CD8-positive, alpha-beta memory T cell (primary cell): ENCODE measurements at regions of chr16 and their contacts with region 1.

Region 1: DNA sequence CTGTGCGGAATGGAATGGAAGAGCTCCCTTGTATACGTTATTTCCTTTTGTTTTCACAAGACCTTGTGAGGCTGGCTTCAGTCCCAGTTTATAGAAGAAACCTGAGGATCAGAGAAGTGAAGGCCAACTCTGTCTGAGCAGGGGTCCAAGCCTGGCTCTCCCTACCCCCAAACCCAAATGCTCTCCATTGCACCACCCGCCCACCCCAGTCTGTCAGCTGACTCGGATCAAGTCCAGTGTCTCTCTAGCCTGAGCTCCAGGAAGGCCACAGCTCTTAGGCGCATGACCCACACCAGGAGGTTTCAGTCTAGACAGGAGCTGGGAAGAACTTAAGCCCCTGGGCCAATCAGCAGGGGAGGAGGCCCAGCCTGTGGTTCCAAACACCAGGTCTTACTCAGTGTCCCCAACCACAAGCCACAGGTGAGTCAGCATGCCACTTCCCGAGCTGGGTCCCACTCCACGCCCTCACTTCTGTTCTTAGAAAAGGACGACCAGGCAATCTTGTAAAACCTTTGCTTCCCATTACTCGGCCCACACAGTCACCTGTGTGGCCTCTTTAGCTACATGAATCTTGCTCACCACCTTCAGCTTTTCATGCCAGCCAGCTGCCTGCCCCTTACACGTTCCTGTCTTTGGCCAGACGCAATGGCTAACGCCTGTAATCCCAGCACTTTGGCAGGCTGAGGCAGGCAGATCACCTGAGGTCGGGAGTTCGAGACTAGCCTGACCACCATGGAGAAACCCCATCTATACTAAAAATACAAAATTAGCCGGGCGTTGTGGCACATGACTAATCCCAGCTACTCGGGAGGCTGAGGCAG is 27.8 kb downstream of the TK2 start:
- DNase-seq: peak; percentile 43 to 94 (median 69)
- H3K4me3 ChIP-seq: peak overlapping the region; percentile 41
- H3K4me3 Mint-ChIP-seq: peak overlapping the region; percentile 73 to 89 (median 82)
- H3K27ac ChIP-seq: peak overlapping the region; percentile 59
- H3K27ac Mint-ChIP-seq: peak overlapping the region; percentile 95 to 100 (median 96)
- H3K4me1 ChIP-seq: peaks cover 78% of the 10 kb centered on the region
- H3K4me1 Mint-ChIP-seq: peaks cover 84 to 93% (median 86%) of the 10 kb centered on the region in 3 donors
- H3K27me3 ChIP-seq: no peaks in the 10 kb centered on the region
- H3K27me3 Mint-ChIP-seq: no peaks in the 10 kb centered on the region

Region 2: GRCh38 chr16:66406534-66407221 is 115.5 kb before region 1 on chr16:
- CTCF ChIA-PET with region 1: interaction called, 10 read pairs
- POLR2A ChIA-PET with region 1: no interaction called
- DNase-seq: peak; percentile 74 to 89 (median 82)
- H3K4me3 ChIP-seq: peak overlapping the region; percentile 75
- H3K4me3 Mint-ChIP-seq: peak overlapping the region; percentile 81 to 93 (median 85)
- H3K27ac ChIP-seq: no peak overlapping the region
- H3K27ac Mint-ChIP-seq: peak overlapping the region in 4 of 8 donors; percentile 29 to 76 (median 64)
- H3K4me1 ChIP-seq: peaks cover 21% of the 10 kb centered on the region
- H3K4me1 Mint-ChIP-seq: peaks cover 25 to 29% (median 28%) of the 10 kb centered on the region in 3 donors
- H3K27me3 ChIP-seq: no peaks in the 10 kb centered on the region
- H3K27me3 Mint-ChIP-seq: peaks cover 0 to 12% of the 10 kb centered on the region in 2 donors

Region 3: GRCh38 chr16:66444049-66444481 is 78.1 kb before region 1 on chr16:
- CTCF ChIA-PET with region 1: no interaction called
- POLR2A ChIA-PET with region 1: no interaction called
- DNase-seq: no peak
- H3K4me3 ChIP-seq: no peak overlapping the region
- H3K4me3 Mint-ChIP-seq: no peak overlapping the region
- H3K27ac ChIP-seq: no peak overlapping the region
- H3K27ac Mint-ChIP-seq: peak overlapping the region in 1 of 8 donors; percentile 11
- H3K4me1 ChIP-seq: no peaks in the 10 kb centered on the region
- H3K4me1 Mint-ChIP-seq: no peaks in the 10 kb centered on the region
- H3K27me3 ChIP-seq: peaks cover 10% of the 10 kb centered on the region
- H3K27me3 Mint-ChIP-seq: peaks cover 9 to 50% of the 10 kb centered on the region in 2 donors

Region 4: DNA sequence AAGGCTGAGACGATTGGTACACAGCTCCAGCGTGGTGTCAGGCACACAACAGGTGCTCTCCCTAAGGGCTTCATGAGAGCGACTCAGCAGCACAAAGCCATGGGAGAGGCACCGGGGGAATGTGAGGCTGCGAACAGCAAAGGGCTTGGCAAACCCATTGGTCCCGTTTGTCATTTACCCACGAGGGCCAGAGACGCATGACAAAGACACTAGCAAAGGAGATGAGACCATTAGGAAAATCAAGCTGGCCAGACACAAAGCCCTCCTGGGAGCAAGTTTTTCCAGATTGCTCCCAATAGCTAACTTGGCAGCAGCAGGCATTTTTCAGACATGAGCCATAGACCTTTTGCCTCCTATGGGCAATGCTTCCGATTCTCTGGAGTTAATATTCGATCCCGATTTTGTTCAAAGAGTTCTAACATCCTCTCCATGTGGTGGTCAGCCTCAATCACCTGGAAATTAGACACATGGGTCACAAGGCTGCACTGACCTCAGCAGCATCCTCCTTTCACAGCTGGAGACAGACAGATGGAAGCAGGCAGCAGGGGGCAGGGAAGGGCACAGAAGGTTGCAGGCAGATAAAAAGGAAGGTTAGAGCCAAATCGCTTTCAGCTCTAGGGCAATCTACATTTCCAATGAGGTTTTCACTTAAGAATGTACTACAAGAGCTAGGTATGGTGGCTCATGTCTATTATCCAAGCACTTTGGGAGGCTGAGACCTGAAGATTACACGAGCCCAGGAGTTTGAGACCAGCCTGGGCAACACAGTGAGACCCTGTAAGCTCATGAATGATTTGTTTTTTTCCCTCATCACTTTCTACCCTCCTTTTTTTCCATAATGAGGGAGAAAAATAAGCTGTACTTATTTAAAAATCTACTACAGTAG is 10.3 kb before region 1 on chr16:
- CTCF ChIA-PET with region 1: interaction called, 39 read pairs
- POLR2A ChIA-PET with region 1: interaction called, 7 read pairs
- DNase-seq: no peak
- H3K4me3 ChIP-seq: no peak overlapping the region
- H3K4me3 Mint-ChIP-seq: peak overlapping the region in 1 of 7 donors; percentile 8
- H3K27ac ChIP-seq: no peak overlapping the region
- H3K27ac Mint-ChIP-seq: peak overlapping the region in 7 of 8 donors; percentile 16 to 86 (median 66)
- H3K4me1 ChIP-seq: peaks cover 25% of the 10 kb centered on the region
- H3K4me1 Mint-ChIP-seq: peaks cover 33 to 44% (median 35%) of the 10 kb centered on the region in 3 donors
- H3K27me3 ChIP-seq: no peaks in the 10 kb centered on the region
- H3K27me3 Mint-ChIP-seq: no peaks in the 10 kb centered on the region

Region 5: DNA sequence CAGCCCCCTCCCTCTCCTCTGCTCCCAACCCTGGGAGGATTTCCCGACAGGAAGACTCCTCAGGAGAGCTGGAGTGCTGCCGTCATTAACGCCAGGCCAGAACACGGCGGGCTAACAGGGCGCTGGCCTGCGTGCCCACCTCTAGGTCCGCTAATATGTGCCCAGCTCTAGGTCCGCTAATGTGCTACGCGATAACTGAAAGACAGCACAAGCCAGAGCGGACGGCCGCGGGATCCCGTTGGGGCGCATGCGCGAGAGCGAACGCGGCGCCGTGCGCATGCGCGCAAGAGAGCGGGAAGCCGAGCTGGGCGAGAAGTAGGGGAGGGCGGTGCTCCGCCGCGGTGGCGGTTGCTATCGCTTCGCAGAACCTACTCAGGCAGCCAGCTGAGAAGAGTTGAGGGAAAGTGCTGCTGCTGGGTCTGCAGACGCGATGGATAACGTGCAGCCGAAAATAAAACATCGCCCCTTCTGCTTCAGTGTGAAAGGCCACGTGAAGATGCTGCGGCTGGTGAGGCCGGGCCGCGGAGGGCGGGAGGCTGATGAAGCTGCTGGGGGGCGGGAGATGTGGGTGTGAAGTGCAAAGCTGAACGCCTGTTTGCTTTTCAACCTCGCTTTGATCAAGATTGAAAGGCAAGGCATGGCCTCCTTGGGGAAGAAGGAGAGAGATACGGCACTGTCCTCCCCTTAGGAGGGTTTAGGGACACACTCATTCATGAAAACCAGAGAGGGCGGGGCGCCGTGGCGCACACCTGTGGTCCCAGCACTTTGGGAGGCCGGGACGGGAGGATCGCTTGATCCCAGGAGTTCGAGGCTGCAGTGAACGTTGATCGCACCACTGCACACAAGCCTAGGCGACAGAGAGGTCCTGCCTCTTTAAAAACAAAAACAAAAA is 30.4 kb after region 1 on chr16 and contains the start of gene CKLF:
- CTCF ChIA-PET with region 1: interaction called, 32 read pairs
- POLR2A ChIA-PET with region 1: interaction called, 26 read pairs
- DNase-seq: peak; percentile 85 to 94 (median 92)
- H3K4me3 ChIP-seq: peak within 1 kb of the TSS; percentile 87
- H3K4me3 Mint-ChIP-seq: peak within 1 kb of the TSS; percentile 90 to 98 (median 97)
- H3K27ac ChIP-seq: peak within 1 kb of the TSS; percentile 85
- H3K27ac Mint-ChIP-seq: peak within 1 kb of the TSS; percentile 92 to 98 (median 96)
- H3K4me1 ChIP-seq: peaks cover 72% of the 10 kb centered on the region
- H3K4me1 Mint-ChIP-seq: peaks cover 76 to 88% (median 86%) of the 10 kb centered on the region in 3 donors
- H3K27me3 ChIP-seq: no peaks in the 10 kb centered on the region
- H3K27me3 Mint-ChIP-seq: peaks cover 0 to 5% of the 10 kb centered on the region in 2 donors
- total RNA-seq, gene CKLF: 118 to 121 TPM

Region 6: DNA sequence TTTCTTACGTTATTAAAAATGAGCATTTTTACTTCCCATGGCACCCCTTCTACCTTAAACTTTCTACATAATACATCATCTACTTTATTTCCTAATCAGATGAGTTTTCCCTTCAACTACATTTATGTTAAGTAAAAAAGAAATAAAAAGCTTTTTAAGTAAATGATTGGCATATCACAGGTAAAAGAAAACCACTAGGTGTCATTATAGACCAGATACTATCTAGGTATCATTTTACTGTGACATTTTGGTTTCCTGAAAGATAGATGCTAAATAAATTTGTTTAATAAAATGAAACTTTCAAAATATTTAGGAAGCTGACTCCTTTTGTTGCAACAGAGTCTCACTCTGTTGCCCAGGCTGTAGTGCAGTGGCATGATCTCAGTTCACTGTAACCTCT is 40.2 kb after region 1 on chr16:
- CTCF ChIA-PET with region 1: interaction called, 3 read pairs
- POLR2A ChIA-PET with region 1: interaction called, 11 read pairs
- DNase-seq: peak in 2 of 5 donors; percentile 16 to 27
- H3K4me3 ChIP-seq: no peak overlapping the region
- H3K4me3 Mint-ChIP-seq: peak overlapping the region; percentile 3 to 71 (median 48)
- H3K27ac ChIP-seq: no peak overlapping the region
- H3K27ac Mint-ChIP-seq: peak overlapping the region; percentile 13 to 91 (median 74)
- H3K4me1 ChIP-seq: peaks cover 38% of the 10 kb centered on the region
- H3K4me1 Mint-ChIP-seq: peaks cover 70 to 79% (median 78%) of the 10 kb centered on the region in 3 donors
- H3K27me3 ChIP-seq: no peaks in the 10 kb centered on the region
- H3K27me3 Mint-ChIP-seq: no peaks in the 10 kb centered on the region

Region 7: DNA sequence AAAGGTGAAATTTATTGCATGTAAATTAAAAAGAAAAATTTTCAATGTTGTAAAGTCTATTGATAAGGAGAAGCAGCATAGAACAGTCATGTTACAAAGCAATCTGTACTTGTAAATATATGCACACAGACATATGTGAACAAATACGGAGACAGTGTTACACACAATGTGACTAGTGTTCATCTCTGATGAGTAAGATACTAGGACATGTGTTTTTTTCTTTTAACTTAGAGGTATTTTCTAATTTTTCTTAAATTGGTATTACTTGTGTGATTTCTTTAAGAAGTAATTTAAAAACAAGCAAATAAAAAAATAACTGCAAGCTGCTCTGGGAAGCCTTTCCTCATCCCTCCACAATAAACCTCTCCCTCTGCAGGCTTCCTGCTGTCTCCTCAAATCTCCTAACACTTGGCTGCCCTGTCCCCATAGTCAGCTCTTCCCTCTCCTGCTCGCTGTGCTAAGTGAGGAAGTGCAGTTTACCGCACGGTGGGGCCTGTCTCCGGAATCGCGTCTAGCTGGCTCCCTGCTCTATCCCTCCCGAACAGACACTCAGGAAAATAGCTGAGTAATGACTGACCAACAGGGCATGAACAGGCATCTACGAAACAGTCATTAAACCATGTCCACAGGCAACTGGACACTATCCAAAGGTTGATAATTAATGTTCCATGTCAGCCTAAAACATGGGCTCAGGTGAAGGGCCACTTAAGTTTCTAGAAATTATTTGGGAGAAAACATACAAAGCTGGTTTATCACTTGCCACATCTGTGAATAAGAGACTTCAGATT is 138.5 kb after region 1 on chr16:
- CTCF ChIA-PET with region 1: no interaction called
- POLR2A ChIA-PET with region 1: no interaction called
- DNase-seq: no peak
- H3K4me3 ChIP-seq: no peak overlapping the region
- H3K4me3 Mint-ChIP-seq: peak overlapping the region in 1 of 7 donors; percentile 56
- H3K27ac ChIP-seq: peak overlapping the region; percentile 45
- H3K27ac Mint-ChIP-seq: peak overlapping the region in 1 of 8 donors; percentile 25
- H3K4me1 ChIP-seq: no peaks in the 10 kb centered on the region
- H3K4me1 Mint-ChIP-seq: no peaks in the 10 kb centered on the region
- H3K27me3 ChIP-seq: peaks cover 4% of the 10 kb centered on the region
- H3K27me3 Mint-ChIP-seq: peaks cover 13 to 25% of the 10 kb centered on the region in 2 donors